ENCODE measurements at regions of chr4 and their contacts with region 1.

Region 1: GRCh38 chr4:112321776-112322684 is 24.9 kb downstream of the ALPK1 start:
- DNase-seq: peak; percentile 83
- ATAC-seq: peak; percentile 73
- H3K4me3 ChIP-seq: peak overlapping the region in 1 of 5 experiments; percentile 44
- H3K4me3 Mint-ChIP-seq: no peak overlapping the region
- H3K27ac ChIP-seq: no peak overlapping the region
- H3K27ac Mint-ChIP-seq: no peak overlapping the region
- H3K4me1 ChIP-seq: peaks cover 0 to 8% of the 10 kb centered on the region in 2 donors
- H3K4me1 Mint-ChIP-seq: peaks cover 12% of the 10 kb centered on the region
- H3K27me3 ChIP-seq: no peaks in the 10 kb centered on the region
- H3K27me3 Mint-ChIP-seq: no peaks in the 10 kb centered on the region
- CTCF ChIP-seq: peak; percentile 99

Region 2: DNA sequence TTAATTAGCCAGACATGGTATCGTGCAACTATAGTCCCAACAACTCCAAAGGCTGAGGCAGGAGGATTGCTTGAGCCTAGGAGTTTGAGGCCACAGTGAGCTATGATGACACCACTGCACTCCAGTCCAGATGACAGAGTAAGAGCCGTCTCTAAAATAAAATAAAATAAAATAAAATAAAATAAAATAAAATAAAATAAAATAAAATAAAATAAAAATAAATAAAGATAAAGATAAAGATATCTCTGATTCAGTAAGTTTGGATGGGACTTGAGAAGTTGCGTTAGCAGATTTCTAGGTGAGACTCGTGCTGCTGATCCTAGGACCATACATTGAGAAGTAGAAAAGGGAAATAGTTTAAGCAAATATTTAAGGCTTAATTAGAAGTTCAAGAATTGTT is 431.6 kb before region 1 on chr4:
- CTCF ChIA-PET with region 1: no interaction called
- POLR2A ChIA-PET with region 1: no interaction called
- intact Hi-C with region 1: no loop called
- DNase-seq: no peak
- ATAC-seq: no peak
- H3K4me3 ChIP-seq: no peak overlapping the region
- H3K4me3 Mint-ChIP-seq: no peak overlapping the region
- H3K27ac ChIP-seq: no peak overlapping the region
- H3K27ac Mint-ChIP-seq: no peak overlapping the region
- H3K4me1 ChIP-seq: no peaks in the 10 kb centered on the region
- H3K4me1 Mint-ChIP-seq: no peaks in the 10 kb centered on the region
- H3K27me3 ChIP-seq: peaks cover 0 to 3% (median 0%) of the 10 kb centered on the region in 4 experiments
- H3K27me3 Mint-ChIP-seq: peaks cover 5% of the 10 kb centered on the region
- CTCF ChIP-seq: no peak

Region 3: DNA sequence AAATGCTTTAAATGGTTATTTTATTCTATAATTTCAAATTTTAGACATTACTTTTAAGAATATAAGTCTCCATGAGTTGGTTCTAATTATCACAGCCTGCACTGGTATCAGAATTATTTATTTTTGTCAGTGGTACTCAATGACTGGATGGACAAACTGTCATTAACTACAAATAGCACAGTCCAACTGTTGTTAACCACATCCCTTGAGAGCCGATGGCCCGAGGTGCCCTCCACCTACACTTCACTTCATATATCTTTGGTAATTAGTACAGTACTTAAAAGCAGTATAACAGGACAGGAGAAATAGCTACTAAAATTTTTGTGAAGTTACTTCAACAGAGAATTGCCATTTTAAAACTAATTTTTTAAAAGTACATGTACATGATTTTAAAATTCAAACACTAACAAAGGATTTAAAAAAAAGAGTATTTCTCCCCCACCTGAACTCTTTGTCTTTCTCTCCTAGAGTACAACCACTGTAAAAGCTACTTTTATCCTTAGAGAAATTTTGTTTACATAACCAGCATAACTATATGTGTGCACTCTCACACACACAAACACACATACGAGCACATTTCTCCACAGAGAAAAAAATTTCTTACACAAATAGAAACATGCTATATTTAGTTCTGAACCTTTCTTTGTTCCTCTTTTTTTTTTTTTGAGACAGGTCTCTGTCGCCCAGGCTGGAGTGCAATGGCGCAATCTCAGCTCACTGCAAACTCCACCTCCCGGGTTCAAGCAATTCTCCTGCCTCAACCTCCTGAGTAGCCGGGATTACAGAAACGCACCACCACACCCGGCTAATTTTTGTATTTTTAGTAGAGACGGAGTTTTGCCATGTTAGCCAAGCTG is 42.8 kb before region 1 on chr4:
- CTCF ChIA-PET with region 1: interaction called, 65 read pairs
- POLR2A ChIA-PET with region 1: interaction called, 3 read pairs
- intact Hi-C with region 1: loop called (anchors 2 kb)
- DNase-seq: peak; percentile 67
- ATAC-seq: peak; percentile 62
- H3K4me3 ChIP-seq: peak overlapping the region; percentile 8 to 76 (median 47)
- H3K4me3 Mint-ChIP-seq: peak overlapping the region; percentile 80
- H3K27ac ChIP-seq: peak overlapping the region; percentile 49 to 95
- H3K27ac Mint-ChIP-seq: peak overlapping the region; percentile 82
- H3K4me1 ChIP-seq: peaks cover 47 to 56% of the 10 kb centered on the region in 2 donors
- H3K4me1 Mint-ChIP-seq: peaks cover 64% of the 10 kb centered on the region
- H3K27me3 ChIP-seq: no peaks in the 10 kb centered on the region
- H3K27me3 Mint-ChIP-seq: no peaks in the 10 kb centered on the region
- CTCF ChIP-seq: no peak